ENCODE measurements at regions of chr11 and their contacts with region 1.

Region 1: GRCh38 chr11:35082321-35083182 is 56.4 kb upstream of the CD44 start:
- DNase-seq: peak; percentile 69
- ATAC-seq: peak; percentile 66
- H3K4me3 Mint-ChIP-seq: peak overlapping the region; percentile 67
- H3K27ac Mint-ChIP-seq: peak overlapping the region; percentile 93
- H3K4me1 Mint-ChIP-seq: peaks cover 83% of the 10 kb centered on the region
- H3K27me3 Mint-ChIP-seq: no peaks in the 10 kb centered on the region
- CTCF ChIP-seq: no peak

Region 2: GRCh38 chr11:34667810-34668582 is 414.6 kb before region 1 on chr11:
- CTCF ChIA-PET with region 1: no interaction called
- POLR2A ChIA-PET with region 1: no interaction called
- intact Hi-C with region 1: no loop called
- DNase-seq: no peak
- ATAC-seq: no peak
- H3K4me3 Mint-ChIP-seq: no peak overlapping the region
- H3K27ac Mint-ChIP-seq: no peak overlapping the region
- H3K4me1 Mint-ChIP-seq: peaks cover 19% of the 10 kb centered on the region
- H3K27me3 Mint-ChIP-seq: peaks cover 4% of the 10 kb centered on the region
- CTCF ChIP-seq: no peak

Region 3: DNA sequence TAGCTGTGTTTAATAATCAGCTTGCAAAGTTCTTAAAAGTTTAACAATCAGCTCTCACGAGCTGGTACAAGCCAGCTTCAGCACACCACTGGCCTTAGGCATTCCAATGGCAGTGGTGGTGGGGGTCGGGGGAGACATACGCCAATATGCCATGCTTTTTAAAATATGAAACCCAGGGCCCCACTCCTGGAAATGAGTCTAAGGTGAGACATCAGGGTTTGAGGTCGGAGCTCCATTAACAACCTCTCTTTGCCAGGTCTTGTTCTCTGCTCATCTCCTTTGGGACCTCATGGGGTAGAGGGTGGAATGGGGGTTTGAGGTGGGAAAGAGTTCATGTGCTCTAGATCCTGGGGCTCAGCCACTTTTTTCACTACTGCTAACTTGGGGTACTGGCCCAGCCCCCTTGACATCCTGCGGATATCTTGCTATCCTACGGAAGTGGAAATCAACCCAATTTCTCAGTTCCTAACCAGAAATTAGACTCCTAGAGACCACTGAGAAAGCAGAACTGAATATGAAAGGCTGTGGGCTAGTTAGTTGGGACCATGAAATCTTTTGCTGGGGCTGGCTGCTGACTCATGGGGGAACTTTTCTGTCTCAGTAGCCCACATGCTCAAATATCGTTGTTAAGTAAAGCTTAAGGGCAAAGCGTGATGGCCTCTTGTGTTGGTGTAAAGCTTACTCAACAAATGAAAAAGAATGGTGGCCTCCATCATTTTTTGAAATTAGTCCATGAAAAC is 76.0 kb before region 1 on chr11:
- CTCF ChIA-PET with region 1: no interaction called
- POLR2A ChIA-PET with region 1: interaction called, 12 read pairs
- intact Hi-C with region 1: loop called (anchors 1 kb)
- DNase-seq: peak; percentile 27
- ATAC-seq: peak; percentile 92
- H3K4me3 Mint-ChIP-seq: peak overlapping the region; percentile 28
- H3K27ac Mint-ChIP-seq: peak overlapping the region; percentile 84
- H3K4me1 Mint-ChIP-seq: peaks cover 58% of the 10 kb centered on the region
- H3K27me3 Mint-ChIP-seq: no peaks in the 10 kb centered on the region
- CTCF ChIP-seq: no peak

Region 4: DNA sequence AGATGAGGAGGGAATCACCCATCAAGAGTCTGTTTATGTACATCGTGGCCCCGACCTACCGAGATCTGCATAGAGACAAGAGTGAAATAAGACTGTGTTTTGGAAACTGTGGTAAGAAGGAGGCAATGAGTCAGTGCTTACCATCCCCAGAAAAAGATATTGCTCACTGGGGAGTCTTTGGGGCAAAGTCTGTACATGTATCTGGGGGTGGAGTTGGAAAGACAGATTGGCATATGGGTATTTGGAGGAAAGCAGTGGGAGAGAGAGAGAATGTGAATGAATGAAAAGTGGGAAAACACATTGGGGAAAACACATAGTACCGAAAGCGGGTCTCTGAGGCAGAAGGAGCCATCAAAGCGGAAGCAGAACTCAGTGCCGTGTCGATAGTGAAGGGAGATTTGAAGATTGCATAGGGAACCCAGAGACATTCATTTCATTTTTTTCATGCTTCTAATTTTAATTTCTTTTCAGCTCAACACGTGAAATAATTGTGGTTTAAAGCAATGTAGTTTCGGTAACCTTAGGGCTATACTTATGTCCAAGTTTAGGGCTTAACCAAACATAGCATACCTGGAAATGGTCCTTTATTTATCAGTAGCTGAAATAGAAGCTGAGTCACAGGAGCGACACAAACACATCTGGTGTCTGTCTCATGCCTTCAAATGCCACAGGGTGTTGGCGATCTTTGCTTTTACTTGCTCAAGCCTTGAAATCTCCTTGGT is 42.2 kb before region 1 on chr11:
- CTCF ChIA-PET with region 1: no interaction called
- POLR2A ChIA-PET with region 1: interaction called, 14 read pairs
- intact Hi-C with region 1: loop called (anchors 1 kb)
- DNase-seq: no peak
- ATAC-seq: peak; percentile 66
- H3K4me3 Mint-ChIP-seq: peak overlapping the region; percentile 77
- H3K27ac Mint-ChIP-seq: peak overlapping the region; percentile 94
- H3K4me1 Mint-ChIP-seq: peaks cover 75% of the 10 kb centered on the region
- H3K27me3 Mint-ChIP-seq: no peaks in the 10 kb centered on the region
- CTCF ChIP-seq: no peak

Region 5: GRCh38 chr11:35106595-35106994 is 24.0 kb after region 1 on chr11:
- CTCF ChIA-PET with region 1: no interaction called
- POLR2A ChIA-PET with region 1: interaction called, 7 read pairs
- intact Hi-C with region 1: loop called (anchors 1 kb)
- DNase-seq: no peak
- ATAC-seq: peak; percentile 95
- H3K4me3 Mint-ChIP-seq: peak overlapping the region; percentile 72
- H3K27ac Mint-ChIP-seq: peak overlapping the region; percentile 83
- H3K4me1 Mint-ChIP-seq: peaks cover 71% of the 10 kb centered on the region
- H3K27me3 Mint-ChIP-seq: no peaks in the 10 kb centered on the region
- CTCF ChIP-seq: no peak

Region 6: GRCh38 chr11:35138943-35139721 is 56.6 kb after region 1 on chr11 and contains the start of gene CD44:
- CTCF ChIA-PET with region 1: interaction called, 8 read pairs
- POLR2A ChIA-PET with region 1: interaction called, 145 read pairs
- intact Hi-C with region 1: loop called (anchors 1 kb)
- DNase-seq: peak; percentile 68
- ATAC-seq: peak; percentile 79
- H3K4me3 Mint-ChIP-seq: peak within 1 kb of the TSS; percentile 97
- H3K27ac Mint-ChIP-seq: peak within 1 kb of the TSS; percentile 98
- H3K4me1 Mint-ChIP-seq: peaks cover 57% of the 10 kb centered on the region
- H3K27me3 Mint-ChIP-seq: no peaks in the 10 kb centered on the region
- CTCF ChIP-seq: no peak
- total RNA-seq, gene CD44: 1,441 and 1,546 TPM in 2 replicates

Region 7: DNA sequence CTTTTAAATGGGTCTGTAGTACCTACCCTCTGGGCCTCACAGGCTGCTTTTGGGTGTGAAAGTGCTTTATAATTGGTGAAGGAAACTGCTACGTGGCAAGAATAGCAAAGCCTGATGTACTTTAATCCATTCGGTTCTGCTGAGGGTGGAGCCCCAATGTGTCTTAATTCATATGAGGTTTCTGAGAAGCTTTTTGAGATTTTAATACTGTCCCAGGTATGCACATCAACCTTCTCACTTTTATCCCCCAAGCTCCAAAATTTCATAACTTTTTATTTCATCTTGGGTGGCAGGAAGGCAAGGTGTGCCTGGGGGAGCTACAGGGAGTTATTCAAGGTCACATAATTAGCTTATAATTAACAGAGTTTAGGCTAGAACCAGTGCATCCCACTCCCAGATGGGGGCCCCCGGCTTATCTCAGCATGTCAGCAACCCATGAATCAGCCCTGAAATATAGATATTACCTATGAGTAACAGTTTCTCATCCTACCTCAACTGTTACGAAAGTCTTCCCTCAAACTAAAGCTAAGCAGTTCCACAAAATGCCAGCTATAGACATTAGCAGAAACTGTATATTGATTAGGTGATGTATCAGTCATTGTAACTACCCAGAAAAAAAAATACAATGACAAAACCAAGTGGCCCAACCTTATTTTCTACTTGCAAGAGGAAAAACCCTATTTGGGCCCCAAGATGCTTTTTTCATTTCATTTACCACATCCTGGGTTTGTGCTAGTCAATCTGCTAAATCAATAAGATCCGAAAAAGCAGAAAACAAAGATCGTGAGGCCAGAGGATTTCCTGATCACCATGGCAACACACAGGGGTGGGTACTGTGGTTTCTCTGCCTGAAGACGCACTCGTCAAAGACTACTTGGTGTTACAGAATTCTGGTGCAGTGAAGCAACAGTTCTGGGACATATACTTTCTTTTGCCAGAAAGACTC is 83.1 kb after region 1 on chr11:
- CTCF ChIA-PET with region 1: no interaction called
- POLR2A ChIA-PET with region 1: interaction called, 6 read pairs
- intact Hi-C with region 1: loop called (anchors 1 kb)
- DNase-seq: peak; percentile 55
- ATAC-seq: peak; percentile 68
- H3K4me3 Mint-ChIP-seq: peak overlapping the region; percentile 76
- H3K27ac Mint-ChIP-seq: peak overlapping the region; percentile 91
- H3K4me1 Mint-ChIP-seq: peaks cover 100% of the 10 kb centered on the region
- H3K27me3 Mint-ChIP-seq: no peaks in the 10 kb centered on the region
- CTCF ChIP-seq: no peak